IMR-90 (cell line): ENCODE measurements at regions of chr1 and their contacts with region 1.

Region 1: DNA sequence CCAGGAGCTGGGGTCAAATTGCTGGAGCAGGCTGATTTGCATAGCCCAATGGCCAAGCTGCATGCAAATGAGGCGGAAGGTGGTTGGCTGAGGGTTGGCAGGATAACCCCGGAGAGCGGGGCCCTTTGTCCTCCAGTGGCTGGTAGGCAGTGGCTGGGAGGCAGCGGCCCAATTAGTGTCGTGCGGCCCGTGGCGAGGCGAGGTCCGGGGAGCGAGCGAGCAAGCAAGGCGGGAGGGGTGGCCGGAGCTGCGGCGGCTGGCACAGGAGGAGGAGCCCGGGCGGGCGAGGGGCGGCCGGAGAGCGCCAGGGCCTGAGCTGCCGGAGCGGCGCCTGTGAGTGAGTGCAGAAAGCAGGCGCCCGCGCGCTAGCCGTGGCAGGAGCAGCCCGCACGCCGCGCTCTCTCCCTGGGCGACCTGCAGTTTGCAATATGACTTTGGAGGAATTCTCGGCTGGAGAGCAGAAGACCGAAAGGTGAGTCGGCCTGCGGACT is at the start of gene GADD45A:
- DNase-seq: peak; percentile 100
- ATAC-seq: peak; percentile 87
- H3K4me3 ChIP-seq: peak within 1 kb of the TSS; percentile 99
- H3K27ac ChIP-seq: peak within 1 kb of the TSS; percentile 98
- H3K4me1 ChIP-seq: peaks cover 12% of the 10 kb centered on the region
- H3K27me3 ChIP-seq: no peaks in the 10 kb centered on the region
- CTCF ChIP-seq: no peak
- POLR2A ChIP-seq: peak; percentile 99
- RAD21 ChIP-seq: peak; percentile 25
- total RNA-seq, gene GADD45A: 10.9 and 16.7 TPM in 2 replicates

Region 2: DNA sequence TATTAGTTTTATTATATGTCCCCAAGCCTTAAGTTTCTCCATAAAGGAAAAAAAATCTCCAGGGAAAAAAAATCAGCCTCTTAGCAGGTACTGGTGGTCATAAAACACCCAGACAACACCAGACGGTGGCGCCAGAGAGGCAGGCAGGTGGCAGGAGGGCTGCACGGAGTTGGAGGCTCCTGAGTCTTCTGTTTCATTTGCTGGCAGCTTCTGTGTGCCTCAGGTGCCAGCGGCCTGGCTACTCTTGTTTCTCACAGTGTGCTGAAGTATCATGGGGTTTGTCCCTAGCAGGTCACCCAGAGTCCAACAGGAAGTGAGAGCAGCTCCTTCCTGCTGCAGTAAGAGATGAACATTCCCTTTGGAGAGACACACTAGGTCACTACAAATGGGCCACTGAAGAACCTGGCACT is 123.4 kb before region 1 on chr1:
- CTCF ChIA-PET with region 1: interaction called, 15 read pairs
- POLR2A ChIA-PET with region 1: interaction called, 9 read pairs
- dilution Hi-C with region 1: no loop called
- in situ Hi-C with region 1: loop called (anchors 25 kb)
- intact Hi-C with region 1: loop called (anchors 1 kb)
- DNase-seq: peak; percentile 85
- ATAC-seq: peak; percentile 82
- H3K4me3 ChIP-seq: no peak overlapping the region
- H3K27ac ChIP-seq: no peak overlapping the region
- H3K4me1 ChIP-seq: peaks cover 6% of the 10 kb centered on the region
- H3K27me3 ChIP-seq: no peaks in the 10 kb centered on the region
- CTCF ChIP-seq: peak; percentile 89
- POLR2A ChIP-seq: no peak
- RAD21 ChIP-seq: peak; percentile 92

Region 3: GRCh38 chr1:67748630-67749029 is 63.5 kb after region 1 on chr1:
- CTCF ChIA-PET with region 1: no interaction called
- POLR2A ChIA-PET with region 1: no interaction called
- dilution Hi-C with region 1: no loop called
- in situ Hi-C with region 1: no loop called
- intact Hi-C with region 1: loop called (anchors 2 kb)
- DNase-seq: peak; percentile 84
- ATAC-seq: peak; percentile 61
- H3K4me3 ChIP-seq: peak overlapping the region; percentile 11; the same call in 1 of the 2 replicates
- H3K27ac ChIP-seq: peak overlapping the region; percentile 84
- H3K4me1 ChIP-seq: peaks cover 23% of the 10 kb centered on the region
- H3K27me3 ChIP-seq: no peaks in the 10 kb centered on the region
- CTCF ChIP-seq: no peak
- POLR2A ChIP-seq: no peak
- RAD21 ChIP-seq: no peak

Region 4: DNA sequence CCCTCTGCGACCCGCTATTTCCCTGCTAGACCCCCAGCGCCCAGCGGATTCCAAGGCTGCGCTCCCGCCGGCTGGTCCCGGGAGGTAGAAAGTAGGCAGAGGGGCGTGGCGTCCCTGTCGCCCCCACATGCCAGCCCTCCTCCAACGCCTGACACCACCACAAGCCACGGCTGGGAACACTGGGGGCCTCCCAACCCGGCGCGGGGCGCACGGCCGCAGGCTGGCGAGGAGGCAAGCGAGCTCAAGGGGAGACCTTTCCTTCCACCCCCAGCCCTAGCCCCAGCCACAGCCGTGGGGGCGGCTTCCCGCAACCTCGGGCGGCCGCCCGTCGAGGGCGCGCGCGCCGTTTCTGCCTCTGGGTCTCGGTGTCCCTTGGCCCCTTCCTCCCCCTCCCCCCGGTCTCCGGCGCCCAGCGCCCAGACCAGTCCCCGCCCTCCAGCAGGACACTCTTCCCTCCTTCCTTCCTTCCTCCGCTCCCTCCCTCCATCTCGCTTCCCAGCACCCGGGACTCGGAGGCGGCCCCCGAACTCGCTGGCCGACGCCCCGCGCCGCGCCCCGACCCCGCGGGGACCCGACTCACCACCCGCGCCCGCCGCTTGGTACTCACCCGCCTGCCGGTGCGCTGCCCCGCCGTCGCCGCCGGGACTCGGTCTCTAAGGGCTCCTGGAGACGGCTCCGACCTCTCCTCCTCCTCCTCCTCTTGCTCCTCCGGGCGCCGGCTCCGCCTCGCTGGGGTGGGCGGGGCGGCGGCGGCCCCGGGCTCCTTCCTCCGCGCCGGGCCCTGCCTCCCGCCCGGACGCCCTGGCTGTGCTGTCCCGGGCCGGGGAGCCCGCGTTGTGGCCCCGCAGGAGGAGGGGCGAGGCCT is 147.9 kb after region 1 on chr1 and contains the start of gene GNG12:
- CTCF ChIA-PET with region 1: no interaction called
- POLR2A ChIA-PET with region 1: no interaction called
- dilution Hi-C with region 1: no loop called
- in situ Hi-C with region 1: no loop called
- intact Hi-C with region 1: loop called (anchors 2 kb)
- DNase-seq: peak; percentile 73
- ATAC-seq: peak; percentile 89
- H3K4me3 ChIP-seq: peak within 1 kb of the TSS; percentile 93
- H3K27ac ChIP-seq: peak within 1 kb of the TSS; percentile 75
- H3K4me1 ChIP-seq: peaks cover 2% of the 10 kb centered on the region; the same call in 1 of the 2 replicates
- H3K27me3 ChIP-seq: no peaks in the 10 kb centered on the region
- CTCF ChIP-seq: no peak
- POLR2A ChIP-seq: peak; percentile 66
- RAD21 ChIP-seq: no peak
- total RNA-seq, gene GNG12: 132 and 233 TPM in 2 replicates

Region 5: GRCh38 chr1:68230007-68230802 is 545.1 kb after region 1 on chr1:
- CTCF ChIA-PET with region 1: no interaction called
- POLR2A ChIA-PET with region 1: no interaction called
- dilution Hi-C with region 1: no loop called
- in situ Hi-C with region 1: no loop called
- intact Hi-C with region 1: no loop called
- DNase-seq: peak; percentile 47
- ATAC-seq: no peak
- H3K4me3 ChIP-seq: peak overlapping the region; percentile 82
- H3K27ac ChIP-seq: peak overlapping the region; percentile 50
- H3K4me1 ChIP-seq: peaks cover 6% of the 10 kb centered on the region
- H3K27me3 ChIP-seq: no peaks in the 10 kb centered on the region
- CTCF ChIP-seq: no peak
- POLR2A ChIP-seq: no peak
- RAD21 ChIP-seq: no peak